ENCODE measurements at regions of chr10 and their contacts with region 1.

Region 1: GRCh38 chr10:95246579-95247051 is 44.2 kb downstream of the PDLIM1 start:
- DNase-seq: peak; percentile 81
- ATAC-seq: peak; percentile 52
- H3K4me3 ChIP-seq: no peak overlapping the region
- H3K27ac ChIP-seq: peak overlapping the region; percentile 86
- H3K4me1 ChIP-seq: peaks cover 30% of the 10 kb centered on the region
- H3K27me3 ChIP-seq: no peaks in the 10 kb centered on the region
- CTCF ChIP-seq: peak; percentile 77
- POLR2A ChIP-seq: 0 out of 2 replicates have a peak, but pooled peaks have one; percentile 39
- RAD21 ChIP-seq: peak; percentile 90

Region 2: GRCh38 chr10:95183271-95184230 is 63.1 kb before region 1 on chr10:
- CTCF ChIA-PET with region 1: interaction called, 5 read pairs
- POLR2A ChIA-PET with region 1: no interaction called
- dilution Hi-C with region 1: no loop called
- in situ Hi-C with region 1: no loop called
- intact Hi-C with region 1: loop called (anchors 1 kb)
- DNase-seq: peak; percentile 71
- ATAC-seq: peak; percentile 98
- H3K4me3 ChIP-seq: peak overlapping the region; percentile 65
- H3K27ac ChIP-seq: peak overlapping the region; percentile 48; the same call in 1 of the 2 replicates
- H3K4me1 ChIP-seq: no peaks in the 10 kb centered on the region
- H3K27me3 ChIP-seq: peaks cover 2% of the 10 kb centered on the region
- CTCF ChIP-seq: peak; percentile 94
- POLR2A ChIP-seq: no peak
- RAD21 ChIP-seq: peak; percentile 76

Region 3: GRCh38 chr10:95208702-95209391 is 37.8 kb before region 1 on chr10:
- CTCF ChIA-PET with region 1: interaction called, 3 read pairs
- POLR2A ChIA-PET with region 1: no interaction called
- dilution Hi-C with region 1: no loop called
- in situ Hi-C with region 1: no loop called
- intact Hi-C with region 1: loop called (anchors 2 kb)
- DNase-seq: no peak
- ATAC-seq: peak; percentile 59; the same call in 1 of the 2 replicates
- H3K4me3 ChIP-seq: no peak overlapping the region
- H3K27ac ChIP-seq: no peak overlapping the region
- H3K4me1 ChIP-seq: peaks cover 3% of the 10 kb centered on the region; the same call in 1 of the 2 replicates
- H3K27me3 ChIP-seq: no peaks in the 10 kb centered on the region
- CTCF ChIP-seq: peak; percentile 55
- POLR2A ChIP-seq: no peak
- RAD21 ChIP-seq: peak; percentile 47

Region 4: GRCh38 chr10:95279042-95279820 is 32.6 kb after region 1 on chr10:
- CTCF ChIA-PET with region 1: interaction called, 9 read pairs
- POLR2A ChIA-PET with region 1: interaction called, 4 read pairs
- dilution Hi-C with region 1: no loop called
- in situ Hi-C with region 1: no loop called
- intact Hi-C with region 1: loop called (anchors 2 kb)
- DNase-seq: peak; percentile 81
- ATAC-seq: peak; percentile 57
- H3K4me3 ChIP-seq: no peak overlapping the region
- H3K27ac ChIP-seq: peak overlapping the region; percentile 89; the same call in 1 of the 2 replicates
- H3K4me1 ChIP-seq: peaks cover 32% of the 10 kb centered on the region
- H3K27me3 ChIP-seq: no peaks in the 10 kb centered on the region
- CTCF ChIP-seq: no peak
- POLR2A ChIP-seq: no peak
- RAD21 ChIP-seq: no peak

Region 5: DNA sequence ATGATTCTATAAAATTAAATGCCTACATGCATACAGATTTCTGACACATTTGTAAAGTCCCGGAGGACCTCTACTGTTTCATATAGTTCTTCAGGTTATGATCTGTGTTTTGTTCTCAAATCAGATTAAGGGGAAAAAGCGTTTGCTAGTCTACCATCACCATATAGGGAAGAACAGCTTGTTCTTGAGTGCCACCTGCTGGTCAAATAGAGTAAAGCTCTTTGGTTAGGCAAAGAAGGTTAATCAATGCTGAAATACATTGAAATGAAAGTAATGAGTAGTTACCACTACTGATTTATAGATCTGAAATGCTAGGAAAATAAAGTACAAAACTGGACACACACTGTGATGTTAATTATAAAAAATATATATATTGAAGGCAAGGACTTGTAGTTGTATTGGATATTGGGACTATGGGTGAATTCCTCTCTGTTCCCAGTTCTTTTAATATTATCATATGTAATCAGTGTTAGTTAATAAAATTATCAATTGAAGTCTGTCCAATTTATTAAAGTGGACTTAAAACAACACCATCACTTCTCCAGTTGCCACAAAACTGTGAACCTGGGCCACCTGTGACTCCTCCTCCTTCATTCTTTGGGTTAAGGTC is 116.8 kb after region 1 on chr10:
- CTCF ChIA-PET with region 1: interaction called, 29 read pairs
- POLR2A ChIA-PET with region 1: interaction called, 6 read pairs
- dilution Hi-C with region 1: no loop called
- in situ Hi-C with region 1: loop called (anchors 5 kb)
- intact Hi-C with region 1: loop called (anchors 1 kb)
- DNase-seq: peak; percentile 77
- ATAC-seq: peak; percentile 79
- H3K4me3 ChIP-seq: no peak overlapping the region
- H3K27ac ChIP-seq: no peak overlapping the region
- H3K4me1 ChIP-seq: no peaks in the 10 kb centered on the region
- H3K27me3 ChIP-seq: peaks cover 3% of the 10 kb centered on the region
- CTCF ChIP-seq: peak; percentile 94
- POLR2A ChIP-seq: peak; percentile 41; the same call in 1 of the 2 replicates
- RAD21 ChIP-seq: peak; percentile 99

Region 6: GRCh38 chr10:95646160-95646559 is 399.5 kb after region 1 on chr10:
- CTCF ChIA-PET with region 1: no interaction called
- POLR2A ChIA-PET with region 1: no interaction called
- dilution Hi-C with region 1: no loop called
- in situ Hi-C with region 1: no loop called
- intact Hi-C with region 1: no loop called
- DNase-seq: no peak
- ATAC-seq: no peak
- H3K4me3 ChIP-seq: no peak overlapping the region
- H3K27ac ChIP-seq: no peak overlapping the region
- H3K4me1 ChIP-seq: no peaks in the 10 kb centered on the region; the same call in 1 of the 2 replicates
- H3K27me3 ChIP-seq: no peaks in the 10 kb centered on the region
- CTCF ChIP-seq: no peak
- POLR2A ChIP-seq: no peak
- RAD21 ChIP-seq: no peak

Measured in IMR-90 (cell line).